Panc1 (cell line): ENCODE measurements at regions of chr6 and their contacts with region 1.

Region 1: GRCh38 chr6:114216789-114217467 is 125.9 kb downstream of the HS3ST5 start:
- DNase-seq: no peak
- ATAC-seq: no peak
- H3K4me3 ChIP-seq: no peak overlapping the region
- H3K27ac ChIP-seq: no peak overlapping the region
- H3K4me1 ChIP-seq: no peaks in the 10 kb centered on the region
- H3K27me3 ChIP-seq: no peaks in the 10 kb centered on the region
- CTCF ChIP-seq: no peak

Region 2: GRCh38 chr6:114157848-114158247 is 59.1 kb before region 1 on chr6:
- CTCF ChIA-PET with region 1: no interaction called
- POLR2A ChIA-PET with region 1: no interaction called
- in situ Hi-C with region 1: loop called (anchors 10 kb)
- intact Hi-C with region 1: no loop called
- DNase-seq: no peak
- ATAC-seq: no peak
- H3K4me3 ChIP-seq: no peak overlapping the region
- H3K27ac ChIP-seq: no peak overlapping the region
- H3K4me1 ChIP-seq: no peaks in the 10 kb centered on the region
- H3K27me3 ChIP-seq: no peaks in the 10 kb centered on the region
- CTCF ChIP-seq: no peak

Region 3: GRCh38 chr6:115323001-115323400 is 1106.1 kb after region 1 on chr6:
- CTCF ChIA-PET with region 1: no interaction called
- POLR2A ChIA-PET with region 1: interaction called, 10 read pairs
- in situ Hi-C with region 1: no loop called
- intact Hi-C with region 1: no loop called
- DNase-seq: no peak
- ATAC-seq: no peak
- H3K4me3 ChIP-seq: no peak overlapping the region
- H3K27ac ChIP-seq: no peak overlapping the region
- H3K4me1 ChIP-seq: no peaks in the 10 kb centered on the region
- H3K27me3 ChIP-seq: no peaks in the 10 kb centered on the region
- CTCF ChIP-seq: no peak